ENCODE measurements at regions of chr6 and their contacts with region 1.

Region 1: GRCh38 chr6:109382576-109383437 is 540 bp upstream of the CD164 start:
- DNase-seq: peak; percentile 85 to 97 (median 91)
- ATAC-seq: peak; percentile 71
- H3K4me3 ChIP-seq: peak overlapping the region; percentile 81
- H3K4me3 Mint-ChIP-seq: peak overlapping the region; percentile 97
- H3K27ac ChIP-seq: peak overlapping the region; percentile 96 to 99
- H3K27ac Mint-ChIP-seq: peak overlapping the region; percentile 93
- H3K4me1 ChIP-seq: peaks cover 23% of the 10 kb centered on the region
- H3K4me1 Mint-ChIP-seq: peaks cover 57% of the 10 kb centered on the region
- H3K27me3 ChIP-seq: no peaks in the 10 kb centered on the region
- H3K27me3 Mint-ChIP-seq: no peaks in the 10 kb centered on the region
- CTCF ChIP-seq: peak; percentile 84

Region 2: DNA sequence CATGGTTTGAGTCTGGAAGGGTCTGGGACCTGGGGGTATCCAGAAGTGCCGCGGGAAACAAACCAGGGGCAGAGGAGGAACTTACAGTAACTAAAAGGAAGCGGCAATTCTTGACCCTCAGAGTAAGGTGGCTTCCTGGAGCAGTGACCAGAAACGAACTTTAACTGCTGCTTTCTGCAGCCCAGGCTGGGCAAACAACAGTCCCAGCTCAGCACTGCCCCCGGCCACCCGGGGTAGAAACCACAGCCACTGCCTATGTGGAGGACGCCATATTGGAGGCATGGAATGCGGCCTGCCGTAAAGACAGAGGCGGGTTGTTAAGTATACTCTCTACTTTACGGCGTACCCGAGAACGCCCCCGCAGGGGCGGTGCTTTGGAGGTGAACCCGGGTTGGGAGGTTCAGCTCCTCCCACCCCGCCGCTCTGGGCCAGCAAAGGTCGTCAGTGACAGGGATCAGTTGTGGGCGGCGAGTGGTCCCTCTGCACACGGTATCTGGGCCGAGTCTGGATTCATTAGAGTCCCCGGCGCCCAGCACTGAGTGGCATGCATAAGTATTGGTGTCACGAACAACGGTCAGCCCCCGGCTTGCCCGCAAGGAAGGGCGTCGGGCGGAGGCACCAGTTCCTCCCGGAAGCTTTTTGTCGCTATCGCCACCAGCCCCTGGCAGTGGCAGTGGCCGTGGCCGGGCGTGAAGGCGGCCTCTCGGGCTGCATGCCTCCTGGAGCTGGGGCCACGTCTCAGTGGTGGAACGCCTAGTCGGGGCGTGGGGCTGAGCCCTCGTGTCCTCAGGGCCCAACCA is 1923.3 kb before region 1 on chr6 and contains the start of gene PDSS2:
- CTCF ChIA-PET with region 1: no interaction called
- POLR2A ChIA-PET with region 1: interaction called, 5 read pairs
- intact Hi-C with region 1: loop called in 1 of 2 experiments (anchors 10 kb)
- DNase-seq: peak; percentile 89 to 98 (median 96)
- ATAC-seq: peak; percentile 96
- H3K4me3 ChIP-seq: peak within 1 kb of the TSS; percentile 91
- H3K4me3 Mint-ChIP-seq: peak within 1 kb of the TSS; percentile 94
- H3K27ac ChIP-seq: peak within 1 kb of the TSS; percentile 71 to 79
- H3K27ac Mint-ChIP-seq: peak within 1 kb of the TSS; percentile 97
- H3K4me1 ChIP-seq: peaks cover 16% of the 10 kb centered on the region
- H3K4me1 Mint-ChIP-seq: peaks cover 23% of the 10 kb centered on the region
- H3K27me3 ChIP-seq: no peaks in the 10 kb centered on the region
- H3K27me3 Mint-ChIP-seq: no peaks in the 10 kb centered on the region
- CTCF ChIP-seq: no peak
- total RNA-seq, gene PDSS2: 5.8 to 6.6 TPM

Region 3: DNA sequence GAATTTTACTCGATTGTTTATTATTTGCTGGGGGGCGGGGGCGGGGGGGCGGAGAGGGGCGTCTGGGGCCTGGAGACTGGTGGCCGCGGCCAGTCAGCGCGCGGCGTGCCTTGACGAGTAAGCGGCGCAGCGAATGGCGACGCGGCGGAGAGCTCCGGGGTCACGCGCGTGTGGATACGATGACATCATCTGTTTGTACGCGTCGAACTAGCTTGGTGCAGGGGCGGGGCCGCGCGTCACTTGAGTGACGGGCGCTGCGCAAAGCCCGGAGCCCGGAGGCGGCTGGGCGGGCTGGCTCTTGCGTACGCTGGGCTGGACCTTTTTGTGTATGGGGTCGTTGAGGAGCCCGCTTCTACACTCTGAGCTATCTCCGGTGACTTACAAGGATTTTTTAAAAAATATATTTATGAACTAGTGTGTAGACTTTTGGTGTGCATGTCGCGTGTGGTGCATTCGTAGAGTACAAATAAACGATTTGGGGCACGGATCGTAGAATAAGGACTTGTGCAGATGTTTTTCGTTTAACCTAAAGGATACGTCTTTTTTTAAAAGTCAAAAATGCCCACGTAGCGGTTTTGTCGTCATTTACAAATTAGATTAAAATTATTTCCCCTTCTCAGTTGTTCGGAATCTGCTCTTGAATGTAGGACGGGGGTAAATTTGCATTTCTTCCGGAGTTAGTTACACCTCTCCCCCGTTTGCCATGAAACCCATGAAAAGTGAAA is 824.3 kb before region 1 on chr6:
- CTCF ChIA-PET with region 1: interaction called, 4 read pairs
- POLR2A ChIA-PET with region 1: interaction called, 42 read pairs
- intact Hi-C with region 1: loop called (anchors 2 to 5 kb)
- DNase-seq: peak; percentile 93 to 100 (median 97)
- ATAC-seq: peak; percentile 67
- H3K4me3 ChIP-seq: peak overlapping the region; percentile 99
- H3K4me3 Mint-ChIP-seq: peak overlapping the region; percentile 99
- H3K27ac ChIP-seq: peak overlapping the region; percentile 99 to 100
- H3K27ac Mint-ChIP-seq: peak overlapping the region; percentile 100
- H3K4me1 ChIP-seq: peaks cover 29% of the 10 kb centered on the region
- H3K4me1 Mint-ChIP-seq: peaks cover 20% of the 10 kb centered on the region
- H3K27me3 ChIP-seq: no peaks in the 10 kb centered on the region
- H3K27me3 Mint-ChIP-seq: no peaks in the 10 kb centered on the region
- CTCF ChIP-seq: no peak

Region 4: DNA sequence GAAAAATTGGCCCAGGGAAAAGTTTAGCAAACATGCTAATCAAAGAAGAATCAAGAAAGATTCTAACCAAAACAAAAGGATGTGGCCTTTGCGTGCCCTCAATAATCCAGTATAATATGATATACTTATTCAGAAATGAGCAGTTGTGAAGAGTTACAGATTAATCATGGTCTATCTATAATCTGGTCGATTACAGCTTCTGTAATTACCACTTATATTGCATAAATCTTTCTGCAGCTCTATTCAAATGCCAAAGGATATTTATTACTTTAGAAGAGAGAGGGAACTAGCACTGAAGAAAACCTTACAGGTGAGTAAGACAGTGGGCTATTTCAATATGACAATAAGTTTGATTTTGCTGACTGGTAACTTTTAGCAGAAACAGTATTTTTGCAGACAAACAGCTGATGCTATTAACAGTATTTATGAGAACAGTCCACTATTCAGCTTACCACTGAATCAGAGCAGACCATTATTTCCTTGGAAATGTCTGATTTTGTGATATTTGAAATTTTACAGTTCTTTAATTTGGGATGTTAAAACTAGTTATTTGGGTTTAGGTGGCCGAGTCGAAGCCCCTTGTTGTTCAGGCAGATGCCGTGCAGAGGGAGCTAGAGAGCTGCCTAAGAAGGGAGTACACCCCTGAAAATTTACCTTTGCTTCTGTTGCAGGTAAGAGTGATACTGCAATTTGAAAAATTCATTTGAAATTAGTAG is 195.2 kb before region 1 on chr6:
- CTCF ChIA-PET with region 1: interaction called, 28 read pairs
- POLR2A ChIA-PET with region 1: interaction called, 40 read pairs
- intact Hi-C with region 1: loop called (anchors 1 kb)
- DNase-seq: peak; percentile 35 to 79 (median 57)
- ATAC-seq: peak; percentile 93
- H3K4me3 ChIP-seq: no peak overlapping the region
- H3K4me3 Mint-ChIP-seq: no peak overlapping the region
- H3K27ac ChIP-seq: no peak overlapping the region
- H3K27ac Mint-ChIP-seq: no peak overlapping the region
- H3K4me1 ChIP-seq: no peaks in the 10 kb centered on the region
- H3K4me1 Mint-ChIP-seq: no peaks in the 10 kb centered on the region
- H3K27me3 ChIP-seq: peaks cover 0 to 15% of the 10 kb centered on the region in 2 experiments
- H3K27me3 Mint-ChIP-seq: peaks cover 22% of the 10 kb centered on the region
- CTCF ChIP-seq: peak; percentile 95

Region 5: DNA sequence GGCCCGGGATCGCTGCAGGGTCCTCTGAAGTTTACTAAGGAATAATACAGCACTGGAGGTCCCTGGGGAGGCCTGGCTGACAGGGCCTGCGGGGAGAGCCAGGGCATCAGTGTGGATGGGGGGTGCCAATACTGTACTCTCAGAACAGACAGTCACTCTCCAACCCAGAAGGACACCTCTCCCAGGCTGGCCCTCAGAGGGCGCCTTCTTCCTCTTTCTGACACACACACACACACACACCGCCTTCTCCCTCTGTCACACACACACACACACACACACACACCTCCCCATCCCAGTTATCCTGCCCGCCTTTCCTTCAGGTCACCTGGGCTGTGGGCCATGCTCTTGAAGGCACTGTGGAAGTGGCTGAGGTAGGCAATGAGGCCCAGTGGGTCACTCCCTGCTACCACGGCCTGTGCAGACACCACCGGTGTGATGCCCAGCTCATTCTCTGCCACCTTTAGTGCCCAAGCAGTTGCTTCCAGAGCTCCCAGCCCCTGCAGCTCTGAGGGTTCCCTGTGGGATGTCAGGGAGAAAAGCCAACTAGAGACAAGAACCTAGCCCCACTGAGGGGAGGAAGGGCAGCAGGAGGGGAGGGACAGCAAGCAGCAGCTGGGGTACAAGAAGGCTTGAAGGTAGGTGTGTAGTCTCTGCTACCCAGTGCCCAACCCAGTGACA is 65.2 kb after region 1 on chr6:
- CTCF ChIA-PET with region 1: interaction called, 29 read pairs
- POLR2A ChIA-PET with region 1: interaction called, 102 read pairs
- intact Hi-C with region 1: no loop called
- DNase-seq: peak in 1 of 14 experiments; percentile 49
- ATAC-seq: no peak
- H3K4me3 ChIP-seq: no peak overlapping the region
- H3K4me3 Mint-ChIP-seq: peak overlapping the region; percentile 48
- H3K27ac ChIP-seq: no peak overlapping the region
- H3K27ac Mint-ChIP-seq: peak overlapping the region; percentile 79
- H3K4me1 ChIP-seq: peaks cover 55% of the 10 kb centered on the region
- H3K4me1 Mint-ChIP-seq: peaks cover 48% of the 10 kb centered on the region
- H3K27me3 ChIP-seq: no peaks in the 10 kb centered on the region
- H3K27me3 Mint-ChIP-seq: no peaks in the 10 kb centered on the region
- CTCF ChIP-seq: no peak

Region 6: DNA sequence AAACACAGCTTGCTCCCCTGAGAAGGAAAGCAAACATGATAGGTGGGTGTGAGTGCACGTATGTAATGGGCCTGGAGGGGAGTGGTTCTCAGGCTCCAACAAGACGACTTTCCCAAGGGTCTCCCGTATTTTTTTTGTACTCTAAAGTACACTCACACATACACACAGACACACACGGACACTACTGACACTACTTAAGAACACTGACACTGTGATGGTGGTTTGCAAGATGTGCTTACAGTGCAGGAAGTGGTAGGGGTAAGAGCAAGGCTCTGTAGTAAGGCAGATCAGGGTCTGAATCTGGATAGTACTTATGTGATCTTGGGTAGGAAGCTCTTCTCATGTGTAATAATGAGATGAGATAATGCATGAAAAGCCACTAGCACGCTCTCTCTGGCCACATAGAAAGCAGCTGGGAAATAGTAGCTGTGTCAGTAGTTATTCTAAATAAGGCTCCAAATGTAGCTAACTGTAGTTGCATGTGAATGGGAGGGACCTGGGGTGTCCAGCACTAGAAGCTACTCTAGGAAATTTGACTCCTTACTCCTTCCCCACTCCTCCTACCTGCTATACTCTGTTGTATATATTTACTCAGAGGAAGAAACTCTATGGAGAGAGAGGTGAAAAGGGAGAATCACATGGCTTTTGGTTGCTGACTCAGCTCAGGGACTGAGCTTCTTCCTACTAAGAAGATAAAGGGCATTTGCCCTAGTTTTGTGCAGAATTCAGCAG is 108.6 kb after region 1 on chr6:
- CTCF ChIA-PET with region 1: interaction called, 5 read pairs
- POLR2A ChIA-PET with region 1: interaction called, 18 read pairs
- intact Hi-C with region 1: no loop called
- DNase-seq: peak in 4 of 14 experiments; percentile 37 to 68 (median 57)
- ATAC-seq: peak; percentile 98
- H3K4me3 ChIP-seq: no peak overlapping the region
- H3K4me3 Mint-ChIP-seq: peak overlapping the region; percentile 22
- H3K27ac ChIP-seq: peak overlapping the region in 1 of 2 donors; percentile 51
- H3K27ac Mint-ChIP-seq: peak overlapping the region; percentile 38
- H3K4me1 ChIP-seq: peaks cover 24% of the 10 kb centered on the region
- H3K4me1 Mint-ChIP-seq: peaks cover 17% of the 10 kb centered on the region
- H3K27me3 ChIP-seq: no peaks in the 10 kb centered on the region
- H3K27me3 Mint-ChIP-seq: no peaks in the 10 kb centered on the region
- CTCF ChIP-seq: no peak

Region 7: GRCh38 chr6:110179401-110180227 is 796.8 kb after region 1 on chr6 and contains the start of gene WASF1:
- CTCF ChIA-PET with region 1: no interaction called
- POLR2A ChIA-PET with region 1: interaction called, 13 read pairs
- intact Hi-C with region 1: loop called in 1 of 2 experiments (anchors 10 kb)
- DNase-seq: peak; percentile 78 to 96 (median 86)
- ATAC-seq: peak; percentile 89
- H3K4me3 ChIP-seq: peak within 1 kb of the TSS; percentile 95
- H3K4me3 Mint-ChIP-seq: peak within 1 kb of the TSS; percentile 84
- H3K27ac ChIP-seq: peak within 1 kb of the TSS; percentile 74 to 78
- H3K27ac Mint-ChIP-seq: peak within 1 kb of the TSS; percentile 16
- H3K4me1 ChIP-seq: peaks cover 28% of the 10 kb centered on the region
- H3K4me1 Mint-ChIP-seq: peaks cover 12% of the 10 kb centered on the region
- H3K27me3 ChIP-seq: peaks cover 0 to 9% of the 10 kb centered on the region in 2 experiments
- H3K27me3 Mint-ChIP-seq: peaks cover 10% of the 10 kb centered on the region
- CTCF ChIP-seq: no peak
- total RNA-seq, gene WASF1: 0.19 to 0.22 TPM

Measured in CD4-positive, alpha-beta T cell (primary cell).